Caco-2 (cell line): ENCODE measurements at regions of chr7 and their contacts with region 1.

Region 1: DNA sequence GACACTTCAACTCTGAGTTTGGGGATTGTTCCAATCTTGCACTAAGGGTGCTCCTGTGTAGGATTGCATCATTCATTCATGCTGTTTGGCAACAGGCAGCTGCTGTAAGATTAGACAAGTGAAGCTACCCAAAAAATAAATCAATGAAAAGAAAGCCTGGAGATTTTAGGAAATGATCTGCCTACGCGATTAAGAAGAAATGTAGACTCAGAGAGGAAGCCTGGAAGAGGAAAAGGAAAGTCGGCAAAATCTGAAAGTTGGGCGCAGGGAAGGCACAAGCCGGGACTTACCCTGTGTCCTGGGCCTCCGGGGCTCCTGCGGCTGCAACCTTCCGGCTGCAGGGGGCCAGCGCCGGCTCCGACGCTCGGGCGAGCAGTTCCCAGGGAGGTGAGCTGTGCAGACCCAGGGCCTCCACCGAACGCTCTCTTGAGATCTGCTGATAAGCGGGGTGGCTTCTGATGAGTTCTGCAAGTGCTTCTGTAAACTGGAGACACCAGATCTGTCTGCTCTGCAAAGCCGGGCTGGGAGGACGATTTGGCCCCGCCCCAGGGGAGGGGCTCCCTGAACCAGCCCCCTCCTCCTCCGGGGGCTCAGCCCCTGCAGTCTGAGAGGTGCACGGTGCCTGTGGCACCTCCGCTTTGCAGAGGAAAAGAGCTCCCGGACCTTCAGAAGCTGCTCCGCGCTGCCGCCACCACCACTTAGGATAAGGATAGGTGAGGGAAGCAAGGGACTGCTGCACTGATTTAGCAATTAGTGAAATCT is 17.4 kb downstream of the PSPH start:
- DNase-seq: peak; percentile 96
- H3K4me3 ChIP-seq: peak overlapping the region; percentile 80
- H3K4me3 Mint-ChIP-seq: peak overlapping the region; percentile 85
- H3K27ac Mint-ChIP-seq: peak overlapping the region; percentile 89
- H3K4me1 ChIP-seq: peaks cover 29% of the 10 kb centered on the region
- H3K4me1 Mint-ChIP-seq: peaks cover 21% of the 10 kb centered on the region
- H3K27me3 ChIP-seq: no peaks in the 10 kb centered on the region
- H3K27me3 Mint-ChIP-seq: no peaks in the 10 kb centered on the region
- CTCF ChIP-seq: peak; percentile 31 to 55

Region 2: GRCh38 chr7:56051339-56052191 is 17.7 kb after region 1 on chr7 and contains the starts of genes CCT6A and PSPH:
- CTCF ChIA-PET with region 1: interaction called, 22 read pairs
- POLR2A ChIA-PET with region 1: interaction called, 79 read pairs
- intact Hi-C with region 1: loop called (anchors 1 kb)
- DNase-seq: peak; percentile 99
- H3K4me3 ChIP-seq: peak within 1 kb of the TSS; percentile 59
- H3K4me3 Mint-ChIP-seq: peak within 1 kb of the TSS; percentile 92
- H3K27ac Mint-ChIP-seq: peak within 1 kb of the TSS; percentile 91
- H3K4me1 ChIP-seq: peaks cover 45% of the 10 kb centered on the region
- H3K4me1 Mint-ChIP-seq: peaks cover 4% of the 10 kb centered on the region
- H3K27me3 ChIP-seq: no peaks in the 10 kb centered on the region
- H3K27me3 Mint-ChIP-seq: no peaks in the 10 kb centered on the region
- CTCF ChIP-seq: no peak
- total RNA-seq, gene CCT6A: 242 and 248 TPM in 2 replicates
- total RNA-seq, gene PSPH: 107 and 111 TPM in 2 replicates